Prostate gland (tissue), 2 donors: ENCODE measurements at regions of chr19 and their contacts with region 1.

Region 1: GRCh38 chr19:42254989-42255765 is at the start of gene ERF:
- DNase-seq: peak; percentile 91
- H3K4me3 ChIP-seq: peak within 1 kb of the TSS; percentile 98
- H3K27ac ChIP-seq: peak within 1 kb of the TSS; percentile 98
- H3K4me1 ChIP-seq: peaks cover 14% of the 10 kb centered on the region
- H3K27me3 ChIP-seq: no peaks in the 10 kb centered on the region
- CTCF ChIP-seq: peak in 2 of 4 experiments; percentile 26 to 39
- POLR2A ChIP-seq: peak; percentile 100
- total RNA-seq, gene ERF: 33.9 to 121 TPM

Region 2: GRCh38 chr19:42268704-42269477 is 13.7 kb after region 1 on chr19 and contains the start of gene CIC:
- intact Hi-C with region 1: loop called (anchors 1 kb)
- DNase-seq: peak; percentile 100
- H3K4me3 ChIP-seq: peak within 1 kb of the TSS; percentile 61 to 80
- H3K27ac ChIP-seq: peak within 1 kb of the TSS; percentile 97 to 99
- H3K4me1 ChIP-seq: peaks cover 5% of the 10 kb centered on the region
- H3K27me3 ChIP-seq: no peaks in the 10 kb centered on the region
- CTCF ChIP-seq: no peak
- POLR2A ChIP-seq: peak; percentile 58
- total RNA-seq, gene CIC: 64.6 to 145 TPM

Region 3: GRCh38 chr19:42325273-42325895 is 70.2 kb after region 1 on chr19 and contains the start of gene MEGF8:
- intact Hi-C with region 1: no loop called
- DNase-seq: peak; percentile 96
- H3K4me3 ChIP-seq: peak within 1 kb of the TSS; percentile 63 to 81
- H3K27ac ChIP-seq: peak within 1 kb of the TSS; percentile 63 to 75
- H3K4me1 ChIP-seq: peaks cover 12% of the 10 kb centered on the region
- H3K27me3 ChIP-seq: peaks cover 5% of the 10 kb centered on the region
- CTCF ChIP-seq: peak; percentile 30 to 96 (median 90)
- POLR2A ChIP-seq: peak; percentile 77
- total RNA-seq, gene MEGF8: 22.8 to 30.7 TPM